Activated CD8-positive, alpha-beta T cell treated with anti-CD3 and anti-CD28 coated beads for 36 hours (primary cell): ENCODE measurements at regions of chr17 and their contacts with region 1.

Region 1: DNA sequence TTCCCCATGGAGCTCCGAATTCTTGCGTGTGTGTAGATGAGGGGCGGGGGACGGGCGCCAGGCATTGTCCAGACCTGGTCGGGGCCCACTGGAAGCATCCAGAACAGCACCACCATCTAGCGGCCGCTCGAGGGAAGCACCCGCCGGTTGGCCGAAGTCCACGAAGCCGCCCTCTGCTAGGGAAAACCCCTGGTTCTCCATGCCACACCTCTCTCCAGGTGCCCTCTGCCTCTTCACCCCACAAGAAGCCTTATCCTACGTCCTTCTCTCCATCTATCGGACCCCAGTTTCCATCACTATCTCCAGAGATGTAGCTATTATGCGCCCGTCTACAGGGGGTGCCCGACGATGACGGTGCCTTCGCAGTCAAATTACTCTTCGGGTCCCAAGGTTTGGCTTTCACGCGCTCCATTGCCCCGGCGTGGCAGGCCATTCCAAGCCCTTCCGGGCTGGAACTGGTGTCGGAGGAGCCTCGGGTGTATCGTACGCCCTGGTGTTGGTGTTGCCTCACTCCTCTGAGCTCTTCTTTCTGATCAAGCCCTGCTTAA is 617 bp upstream of the SENP3 start:
- DNase-seq: peak; percentile 93
- ATAC-seq: peak; percentile 76
- H3K4me3 Mint-ChIP-seq: peak overlapping the region; percentile 85
- H3K27ac Mint-ChIP-seq: peak overlapping the region; percentile 91
- H3K4me1 Mint-ChIP-seq: peaks cover 52% of the 10 kb centered on the region
- H3K27me3 Mint-ChIP-seq: no peaks in the 10 kb centered on the region
- CTCF ChIP-seq: peak; percentile 79

Region 2: GRCh38 chr17:7435221-7435675 is 125.9 kb before region 1 on chr17 and contains the start of gene TMEM102:
- CTCF ChIA-PET with region 1: interaction called, 24 read pairs
- POLR2A ChIA-PET with region 1: interaction called, 11 read pairs
- intact Hi-C with region 1: loop called (anchors 5 kb)
- DNase-seq: peak; percentile 99
- ATAC-seq: peak; percentile 82
- H3K4me3 Mint-ChIP-seq: peak within 1 kb of the TSS; percentile 94
- H3K27ac Mint-ChIP-seq: peak within 1 kb of the TSS; percentile 97
- H3K4me1 Mint-ChIP-seq: peaks cover 23% of the 10 kb centered on the region
- H3K27me3 Mint-ChIP-seq: peaks cover 12% of the 10 kb centered on the region
- CTCF ChIP-seq: no peak
- total RNA-seq, gene TMEM102: 12.5 to 14.2 TPM

Region 3: GRCh38 chr17:7502987-7503386 is 58.1 kb before region 1 on chr17:
- CTCF ChIA-PET with region 1: interaction called, 21 read pairs
- POLR2A ChIA-PET with region 1: interaction called, 8 read pairs
- intact Hi-C with region 1: no loop called
- DNase-seq: peak; percentile 24
- ATAC-seq: peak; percentile 50
- H3K4me3 Mint-ChIP-seq: no peak overlapping the region
- H3K27ac Mint-ChIP-seq: no peak overlapping the region
- H3K4me1 Mint-ChIP-seq: no peaks in the 10 kb centered on the region
- H3K27me3 Mint-ChIP-seq: no peaks in the 10 kb centered on the region
- CTCF ChIP-seq: no peak

Region 4: DNA sequence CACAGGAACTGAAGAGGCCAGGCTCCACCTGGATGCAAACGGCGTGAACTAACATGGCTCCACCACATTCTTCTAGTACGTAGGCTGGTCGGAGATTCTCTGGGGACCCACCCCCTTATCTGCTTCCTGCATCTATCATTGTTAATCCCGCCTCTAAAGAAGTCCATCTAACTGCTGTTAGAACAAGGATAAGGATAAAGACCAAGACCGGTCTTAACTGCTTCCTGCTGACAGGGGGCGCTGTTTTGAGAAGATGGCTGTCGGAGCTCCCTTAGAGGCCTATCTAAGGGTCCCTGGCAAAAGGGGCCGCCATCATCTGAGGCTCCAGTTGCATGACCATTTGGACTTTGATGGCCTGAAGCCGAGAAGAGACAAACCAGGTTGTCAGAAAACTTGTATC is 38.1 kb before region 1 on chr17:
- CTCF ChIA-PET with region 1: interaction called, 165 read pairs
- POLR2A ChIA-PET with region 1: interaction called, 5 read pairs
- intact Hi-C with region 1: loop called (anchors 5 kb)
- DNase-seq: peak; percentile 74
- ATAC-seq: peak; percentile 86
- H3K4me3 Mint-ChIP-seq: no peak overlapping the region
- H3K27ac Mint-ChIP-seq: no peak overlapping the region
- H3K4me1 Mint-ChIP-seq: peaks cover 3% of the 10 kb centered on the region
- H3K27me3 Mint-ChIP-seq: no peaks in the 10 kb centered on the region
- CTCF ChIP-seq: peak; percentile 84

Region 5: GRCh38 chr17:7548585-7549400 is 12.3 kb before region 1 on chr17 and contains the start of gene TNFSF12:
- CTCF ChIA-PET with region 1: interaction called, 42 read pairs
- POLR2A ChIA-PET with region 1: interaction called, 14 read pairs
- intact Hi-C with region 1: no loop called
- DNase-seq: peak; percentile 76
- ATAC-seq: peak; percentile 56
- H3K4me3 Mint-ChIP-seq: peak within 1 kb of the TSS; percentile 82
- H3K27ac Mint-ChIP-seq: peak within 1 kb of the TSS; percentile 77
- H3K4me1 Mint-ChIP-seq: peaks cover 54% of the 10 kb centered on the region
- H3K27me3 Mint-ChIP-seq: no peaks in the 10 kb centered on the region
- CTCF ChIP-seq: no peak
- total RNA-seq, gene TNFSF12: 11.8 to 13.8 TPM

Region 6: DNA sequence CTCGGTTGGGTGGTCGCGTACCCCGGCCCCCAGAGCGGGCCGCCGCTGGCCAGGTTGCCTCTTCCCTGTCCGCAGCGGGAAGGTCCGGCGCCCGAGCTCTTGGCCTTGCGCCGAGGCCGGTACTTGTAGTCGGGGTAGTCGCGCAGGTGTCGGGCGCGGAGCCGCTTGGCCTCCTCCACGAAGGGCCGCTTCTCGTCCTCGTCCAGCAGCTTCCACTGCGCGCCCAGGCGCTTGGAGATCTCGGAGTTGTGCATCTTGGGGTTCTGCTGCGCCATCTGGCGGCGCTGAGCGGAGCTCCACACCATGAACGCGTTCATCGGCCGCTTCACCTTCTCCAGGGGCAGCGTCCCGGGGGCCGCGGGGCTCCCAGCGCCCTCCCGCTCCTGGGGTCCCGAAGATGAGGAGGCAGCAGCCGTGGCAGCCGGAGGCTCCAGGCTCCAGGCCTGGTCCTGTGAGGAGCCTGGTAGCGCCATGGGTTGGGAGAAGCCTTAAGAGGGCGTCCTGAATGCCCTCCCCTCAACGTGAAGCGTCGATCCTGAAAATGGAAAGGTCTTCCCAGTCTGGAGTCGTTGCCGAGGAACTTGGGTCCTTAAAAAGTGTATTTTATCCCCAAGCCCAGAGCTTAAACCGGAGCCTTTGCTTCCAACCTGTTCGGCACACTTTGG is 28.2 kb after region 1 on chr17:
- CTCF ChIA-PET with region 1: interaction called, 20 read pairs
- POLR2A ChIA-PET with region 1: interaction called, 17 read pairs
- intact Hi-C with region 1: no loop called
- DNase-seq: peak; percentile 79
- ATAC-seq: peak; percentile 81
- H3K4me3 Mint-ChIP-seq: no peak overlapping the region
- H3K27ac Mint-ChIP-seq: no peak overlapping the region
- H3K4me1 Mint-ChIP-seq: peaks cover 15% of the 10 kb centered on the region
- H3K27me3 Mint-ChIP-seq: no peaks in the 10 kb centered on the region
- CTCF ChIP-seq: peak; percentile 82

Region 7: GRCh38 chr17:7656958-7657609 is 96.0 kb after region 1 on chr17:
- CTCF ChIA-PET with region 1: no interaction called
- POLR2A ChIA-PET with region 1: no interaction called
- intact Hi-C with region 1: no loop called
- DNase-seq: no peak
- ATAC-seq: no peak
- H3K4me3 Mint-ChIP-seq: no peak overlapping the region
- H3K27ac Mint-ChIP-seq: no peak overlapping the region
- H3K4me1 Mint-ChIP-seq: no peaks in the 10 kb centered on the region
- H3K27me3 Mint-ChIP-seq: peaks cover 13% of the 10 kb centered on the region
- CTCF ChIP-seq: no peak

Region 8: DNA sequence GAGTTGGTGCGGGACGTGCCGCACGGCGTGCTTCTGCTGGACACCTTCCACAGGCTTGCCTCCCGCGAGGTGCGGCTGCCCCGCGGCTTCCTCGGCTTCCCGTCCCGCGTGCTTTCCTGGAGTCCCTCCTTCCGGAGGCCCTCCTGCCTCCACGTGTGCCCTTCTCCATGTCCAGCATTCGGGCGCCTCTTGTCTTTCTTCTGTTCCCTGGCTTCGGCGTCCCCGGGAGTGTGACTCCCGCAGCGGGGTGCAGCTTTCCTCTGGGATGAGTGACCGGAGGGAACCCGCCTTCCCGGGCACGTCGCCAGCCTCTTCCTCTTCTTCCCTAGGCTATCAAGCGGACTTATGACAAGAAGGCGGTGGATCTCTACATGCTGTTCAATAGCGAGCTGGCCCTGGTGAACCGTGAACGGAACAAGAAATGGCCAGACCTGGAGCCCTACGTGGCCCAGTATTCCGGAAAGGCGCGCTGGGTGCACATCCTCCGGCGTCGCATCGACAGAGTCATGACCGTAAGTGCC is 179.4 kb after region 1 on chr17:
- CTCF ChIA-PET with region 1: no interaction called
- POLR2A ChIA-PET with region 1: no interaction called
- intact Hi-C with region 1: no loop called
- DNase-seq: no peak
- ATAC-seq: no peak
- H3K4me3 Mint-ChIP-seq: no peak overlapping the region
- H3K27ac Mint-ChIP-seq: no peak overlapping the region
- H3K4me1 Mint-ChIP-seq: no peaks in the 10 kb centered on the region
- H3K27me3 Mint-ChIP-seq: peaks cover 7% of the 10 kb centered on the region
- CTCF ChIP-seq: no peak